ENCODE measurements at regions of chr5 and their contacts with region 1.

Region 1: DNA sequence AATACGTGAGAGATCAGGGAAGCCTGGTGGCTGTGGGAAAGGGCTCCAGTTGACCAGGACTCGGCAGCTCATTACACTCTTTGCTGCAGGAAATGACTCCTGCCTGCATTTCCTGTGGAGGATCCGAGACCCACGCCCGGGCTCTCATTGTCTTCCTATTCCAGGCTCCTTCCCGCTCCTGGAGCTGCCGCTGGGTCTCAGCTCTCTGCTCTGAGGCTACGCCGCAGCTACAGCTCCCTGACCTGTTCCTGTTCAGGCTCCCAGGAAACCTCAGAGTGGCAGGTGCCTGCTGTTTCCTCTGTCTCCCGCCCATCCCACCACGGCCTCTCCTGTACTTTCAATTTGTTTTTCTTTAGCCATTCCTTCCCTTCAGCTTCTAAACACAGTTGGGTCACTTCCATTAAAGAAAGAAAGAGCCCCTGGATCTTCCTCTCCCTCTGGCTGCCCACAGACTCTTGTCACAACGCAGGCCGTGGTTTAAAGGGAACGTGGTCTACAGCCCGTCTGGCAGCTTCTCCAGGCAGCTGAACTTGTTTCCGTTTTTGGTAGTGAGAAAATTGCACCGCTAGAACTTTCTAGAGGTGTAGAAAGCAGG is 71.5 kb downstream of the IL6ST start:
- DNase-seq: peak in 1 of 9 donors; percentile 30
- ATAC-seq: peak; percentile 64
- H3K4me3 ChIP-seq: peak overlapping the region; percentile 69
- H3K4me3 Mint-ChIP-seq: peak overlapping the region; percentile 90 to 100 (median 94)
- H3K27ac ChIP-seq: peak overlapping the region; percentile 25
- H3K27ac Mint-ChIP-seq: peak overlapping the region; percentile 5 to 93 (median 73)
- H3K4me1 ChIP-seq: peaks cover 7 to 9% of the 10 kb centered on the region in 2 donors
- H3K4me1 Mint-ChIP-seq: peaks cover 16 to 37% (median 21%) of the 10 kb centered on the region in 7 donors
- H3K27me3 ChIP-seq: no peaks in the 10 kb centered on the region
- H3K27me3 Mint-ChIP-seq: no peaks in the 10 kb centered on the region

Region 2: GRCh38 chr5:55711968-55712859 is 211.1 kb before region 1 on chr5 and contains the start of gene SLC38A9:
- CTCF ChIA-PET with region 1: no interaction called
- POLR2A ChIA-PET with region 1: no interaction called
- intact Hi-C with region 1: loop called in 1 of 2 experiments (anchors 5 kb)
- DNase-seq: peak; percentile 82 to 91 (median 90)
- ATAC-seq: peak; percentile 100
- H3K4me3 ChIP-seq: peak within 1 kb of the TSS; percentile 87
- H3K4me3 Mint-ChIP-seq: peak within 1 kb of the TSS; percentile 94 to 99 (median 98)
- H3K27ac ChIP-seq: peak within 1 kb of the TSS; percentile 72
- H3K27ac Mint-ChIP-seq: peak within 1 kb of the TSS; percentile 76 to 97 (median 91)
- H3K4me1 ChIP-seq: peaks cover 12 to 16% of the 10 kb centered on the region in 2 donors
- H3K4me1 Mint-ChIP-seq: peaks cover 20 to 40% (median 29%) of the 10 kb centered on the region in 7 donors
- H3K27me3 ChIP-seq: no peaks in the 10 kb centered on the region
- H3K27me3 Mint-ChIP-seq: peaks cover 0 to 3% (median 0%) of the 10 kb centered on the region in 5 donors
- total RNA-seq, gene SLC38A9: 17.7 to 32.6 (median 30.4) TPM

Measured in naive thymus-derived CD4-positive, alpha-beta T cell (primary cell).